Dendritic cell treated with granulocyte-macrophage colony-stimulating factor and Interleukin-4, amounts not matched to agents 40 ng/mL and 50 ng/mL, for 4 days (primary cell): ENCODE measurements at regions of chr17 and their contacts with region 1.

Region 1: DNA sequence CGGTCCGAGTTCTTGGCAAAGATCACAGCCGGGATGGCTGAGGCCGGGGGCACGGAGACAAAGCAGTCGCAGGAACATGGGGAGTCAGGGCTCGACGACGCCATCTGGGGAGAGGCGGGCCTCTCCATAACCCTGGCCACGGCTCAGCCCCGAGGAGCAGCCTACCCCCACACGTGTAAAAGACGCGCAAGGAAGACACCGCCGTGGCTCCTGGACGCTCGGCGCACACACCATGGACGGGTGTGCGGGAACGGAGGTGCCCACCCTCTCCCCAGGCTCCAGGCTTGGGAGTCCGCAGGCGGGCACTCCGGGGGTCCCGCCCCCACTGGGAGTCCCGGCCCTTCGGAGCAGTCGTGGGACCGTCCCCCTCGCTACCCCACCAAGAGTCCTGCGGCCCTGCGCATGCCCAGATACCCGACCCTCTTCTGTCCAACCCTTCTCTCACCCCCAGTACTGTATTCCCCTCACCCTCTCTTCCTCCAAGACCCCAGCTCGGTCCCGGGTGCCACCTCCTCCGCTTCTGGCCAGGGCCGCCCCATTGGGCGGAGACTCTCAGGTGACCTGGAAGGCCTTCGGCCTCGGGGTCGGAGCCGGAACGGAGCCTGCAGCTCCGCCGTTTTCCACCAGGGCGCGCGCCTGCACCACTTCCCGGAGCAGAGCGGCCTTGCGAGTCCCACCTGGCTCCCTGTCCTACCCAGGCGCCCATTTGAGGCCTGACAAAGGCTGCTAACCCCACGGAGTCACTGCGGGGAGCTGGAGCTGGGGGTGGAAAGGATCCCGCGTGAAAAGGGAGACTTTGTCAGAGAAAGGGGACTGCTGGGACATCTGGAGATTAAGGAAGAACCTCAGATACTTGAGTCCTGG is at the start of gene SCRN2:
- H3K4me3 Mint-ChIP-seq: peak within 1 kb of the TSS; percentile 83
- H3K27ac Mint-ChIP-seq: peak within 1 kb of the TSS; percentile 84
- H3K4me1 Mint-ChIP-seq: peaks cover 18% of the 10 kb centered on the region
- H3K27me3 Mint-ChIP-seq: peaks cover 22% of the 10 kb centered on the region

Region 2: DNA sequence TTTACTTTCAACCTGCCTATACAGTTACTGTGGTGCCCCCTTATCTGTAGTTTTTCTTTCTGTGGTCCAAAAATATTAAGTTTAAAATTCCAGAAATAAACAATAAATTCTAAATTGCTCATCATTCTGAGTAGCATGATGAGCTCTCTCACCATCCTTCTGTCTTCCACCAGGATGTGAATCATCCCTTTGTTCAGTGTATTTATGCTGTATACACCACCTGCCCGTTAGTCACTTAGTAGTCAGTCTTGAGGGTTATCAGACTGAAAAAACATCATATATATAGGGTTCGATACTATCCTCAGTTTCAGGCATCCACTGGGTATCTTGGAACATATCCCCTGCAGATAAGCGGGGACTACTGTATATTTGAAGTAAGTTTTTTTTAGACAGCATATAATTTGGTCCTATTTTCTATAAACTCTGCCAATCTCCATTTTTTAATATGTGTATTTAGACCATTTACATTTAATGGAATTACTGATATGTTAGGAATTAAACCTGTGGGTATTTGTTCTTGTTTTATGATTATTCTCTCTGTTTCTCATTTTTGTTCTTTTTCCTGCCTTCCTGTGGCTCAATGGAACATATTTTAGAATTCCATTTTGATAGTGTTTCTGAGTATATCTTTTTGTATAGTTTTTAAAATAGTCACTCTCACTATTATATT is 76.9 kb before region 1 on chr17:
- intact Hi-C with region 1: no loop called
- H3K4me3 Mint-ChIP-seq: no peak overlapping the region
- H3K27ac Mint-ChIP-seq: no peak overlapping the region
- H3K4me1 Mint-ChIP-seq: peaks cover 2% of the 10 kb centered on the region
- H3K27me3 Mint-ChIP-seq: peaks cover 48% of the 10 kb centered on the region

Region 3: DNA sequence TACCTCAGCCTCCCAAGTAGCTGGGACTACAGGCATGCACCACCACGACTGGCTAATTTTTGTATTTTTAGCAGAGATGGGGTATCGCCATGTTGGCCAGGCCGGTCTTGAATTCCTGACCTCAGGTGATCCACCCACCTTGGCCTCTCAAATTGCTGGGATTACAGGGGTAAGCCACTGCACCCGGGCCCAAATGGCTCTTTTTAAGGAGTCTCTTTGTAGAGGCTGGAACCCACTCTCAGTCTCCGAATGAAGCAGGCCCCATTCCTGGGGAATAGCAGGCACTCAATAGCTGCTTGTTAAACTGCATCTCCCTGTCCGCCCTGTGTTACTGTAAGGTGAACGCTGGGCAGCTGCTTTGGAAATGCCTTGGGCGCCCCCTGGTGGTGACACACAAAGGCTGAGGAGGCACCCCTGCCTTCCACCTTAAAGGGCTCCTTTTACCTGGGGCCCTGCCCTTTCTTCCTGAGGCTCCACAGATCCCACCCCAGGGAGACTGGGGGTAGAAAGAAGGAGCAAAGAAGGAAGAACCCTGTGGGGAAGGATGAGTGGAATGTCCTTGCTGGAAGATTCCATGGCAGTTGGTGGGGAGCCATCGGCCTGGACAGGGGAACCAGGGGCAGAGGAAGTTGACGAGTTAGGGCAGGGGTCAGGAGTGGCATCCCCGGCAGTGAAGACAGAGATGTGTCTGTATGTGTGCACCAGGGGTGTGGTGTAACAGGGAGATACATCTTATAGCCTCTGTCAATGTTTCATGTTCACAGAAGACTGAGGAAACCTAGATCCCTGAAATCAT is 49.0 kb after region 1 on chr17:
- intact Hi-C with region 1: loop called (anchors 1 kb)
- H3K4me3 Mint-ChIP-seq: no peak overlapping the region
- H3K27ac Mint-ChIP-seq: no peak overlapping the region
- H3K4me1 Mint-ChIP-seq: peaks cover 33% of the 10 kb centered on the region
- H3K27me3 Mint-ChIP-seq: peaks cover 2% of the 10 kb centered on the region

Region 4: DNA sequence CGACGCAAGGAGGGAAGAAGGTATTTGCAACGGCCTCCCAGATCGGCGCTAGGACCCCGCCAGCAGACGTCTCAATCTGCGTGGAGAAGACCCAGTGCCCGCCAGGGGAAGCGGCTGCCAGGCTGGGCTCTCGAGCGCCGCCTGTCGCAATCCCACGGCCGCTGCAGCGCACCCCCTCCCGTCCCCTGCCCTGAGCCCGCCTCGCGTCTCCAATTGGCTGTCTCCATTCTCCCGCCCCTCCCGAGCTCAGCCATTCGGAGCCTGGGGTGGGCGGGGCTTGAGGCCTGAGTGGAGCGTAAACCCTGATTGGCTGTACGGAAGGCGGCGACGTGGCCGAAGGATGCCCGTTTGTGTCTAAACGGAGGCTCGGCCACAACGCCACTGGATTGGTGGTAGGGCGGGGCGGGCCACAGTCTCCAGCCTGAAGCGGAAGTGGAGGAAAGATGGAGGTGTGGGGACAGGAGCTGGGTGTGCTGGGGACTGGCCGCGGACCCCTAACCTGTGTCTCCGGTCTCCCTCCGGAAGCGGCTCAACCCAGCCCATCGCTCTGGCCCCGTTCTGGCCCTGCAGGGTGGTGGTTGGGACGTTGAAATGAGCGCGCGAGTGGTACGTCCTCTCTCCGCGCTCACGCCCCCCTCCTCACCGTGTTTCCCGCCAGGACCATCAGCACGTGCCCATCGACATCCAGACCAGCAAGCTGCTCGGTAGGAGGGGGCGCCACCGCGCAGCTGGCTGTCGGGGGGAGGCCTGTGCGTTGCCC is 129.9 kb after region 1 on chr17 and contains the start of gene CDK5RAP3:
- intact Hi-C with region 1: loop called (anchors 2 kb)
- H3K4me3 Mint-ChIP-seq: peak within 1 kb of the TSS; percentile 93
- H3K27ac Mint-ChIP-seq: peak within 1 kb of the TSS; percentile 90
- H3K4me1 Mint-ChIP-seq: peaks cover 27% of the 10 kb centered on the region
- H3K27me3 Mint-ChIP-seq: no peaks in the 10 kb centered on the region

Region 5: DNA sequence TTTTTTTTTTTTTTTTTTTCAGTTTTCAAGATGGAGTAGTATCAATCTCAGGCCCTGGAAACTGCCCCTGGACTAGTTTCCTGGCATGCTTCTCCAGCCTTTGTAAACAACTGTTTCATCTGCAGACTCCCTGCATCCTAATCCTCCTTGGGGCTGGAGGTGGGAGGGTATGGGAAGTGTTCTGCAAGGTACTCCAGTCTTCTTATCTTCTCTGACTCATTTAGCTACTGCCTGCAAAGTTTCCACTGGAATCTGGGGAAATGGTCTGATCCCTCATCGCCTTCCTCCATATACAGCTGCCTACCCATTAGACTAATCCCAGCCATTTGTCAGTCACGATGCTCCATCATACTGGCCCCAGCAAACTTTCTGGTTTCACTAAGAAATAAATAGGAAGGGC is 175.1 kb after region 1 on chr17:
- intact Hi-C with region 1: loop called (anchors 5 kb)
- H3K4me3 Mint-ChIP-seq: no peak overlapping the region
- H3K27ac Mint-ChIP-seq: no peak overlapping the region
- H3K4me1 Mint-ChIP-seq: peaks cover 26% of the 10 kb centered on the region
- H3K27me3 Mint-ChIP-seq: peaks cover 38% of the 10 kb centered on the region

Region 6: DNA sequence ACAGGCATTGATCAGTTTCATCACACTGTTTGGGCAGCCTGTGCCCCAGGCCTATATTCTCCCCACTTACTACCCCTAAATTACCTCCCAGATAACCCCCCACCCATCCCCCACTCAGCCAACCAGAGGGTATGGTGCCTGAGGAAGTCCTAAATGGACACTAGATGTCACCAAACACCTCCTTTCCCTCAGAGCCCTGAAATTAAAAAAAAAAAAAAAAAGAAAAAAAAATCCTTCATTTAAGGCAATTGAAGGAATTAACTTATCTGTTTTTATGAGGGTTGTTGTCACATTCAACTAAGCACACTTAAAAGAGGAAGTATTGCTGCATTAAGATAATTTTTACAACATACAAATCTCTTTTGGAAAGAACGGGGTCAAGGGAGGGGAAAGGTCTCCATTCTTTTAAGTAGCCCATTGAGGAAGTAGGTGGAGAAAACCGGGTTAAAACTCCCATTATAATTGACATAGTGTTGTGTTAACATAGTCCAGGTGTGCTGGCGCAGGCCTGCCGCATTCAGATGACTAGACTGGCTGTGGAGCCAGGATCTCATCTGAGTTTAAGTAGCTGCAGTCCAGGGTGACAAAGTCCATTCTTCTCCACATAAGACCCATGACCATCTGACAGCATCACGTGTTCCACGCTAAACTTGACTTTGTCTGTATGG is 312.9 kb after region 1 on chr17:
- intact Hi-C with region 1: no loop called
- H3K4me3 Mint-ChIP-seq: no peak overlapping the region
- H3K27ac Mint-ChIP-seq: no peak overlapping the region
- H3K4me1 Mint-ChIP-seq: peaks cover 8% of the 10 kb centered on the region
- H3K27me3 Mint-ChIP-seq: peaks cover 45% of the 10 kb centered on the region